ENCODE measurements at regions of chr19 and their contacts with region 1.

Region 1: GRCh38 chr19:12126707-12127106 is 13.4 kb downstream of the ZNF20 start:
- DNase-seq: no peak
- ATAC-seq: no peak
- H3K4me3 ChIP-seq: no peak overlapping the region
- H3K27ac ChIP-seq: no peak overlapping the region
- H3K4me1 ChIP-seq: no peaks in the 10 kb centered on the region
- H3K27me3 ChIP-seq: no peaks in the 10 kb centered on the region
- CTCF ChIP-seq: peak; percentile 57

Region 2: DNA sequence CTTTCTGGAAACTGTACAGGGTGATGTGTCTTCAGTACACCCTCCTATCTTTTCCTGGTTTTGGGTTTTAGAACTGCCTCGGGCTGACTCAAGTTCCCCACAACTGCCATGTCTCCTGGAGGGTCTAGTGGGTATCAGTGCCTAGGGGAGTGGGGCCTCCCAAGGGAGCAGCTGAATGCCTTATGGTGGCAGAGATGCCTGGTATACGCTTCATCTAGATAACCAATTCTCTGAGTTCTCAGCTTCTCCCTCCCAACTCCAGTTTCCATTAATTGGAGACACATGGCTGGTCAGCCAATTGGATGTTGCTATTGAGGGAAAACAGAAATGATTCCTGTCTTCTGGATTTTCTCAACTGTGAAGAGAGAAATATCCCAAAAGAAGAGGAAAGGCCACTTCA is 265.4 kb before region 1 on chr19:
- CTCF ChIA-PET with region 1: interaction called, 13 read pairs
- POLR2A ChIA-PET with region 1: no interaction called
- intact Hi-C with region 1: no loop called
- DNase-seq: no peak
- ATAC-seq: no peak
- H3K4me3 ChIP-seq: no peak overlapping the region
- H3K27ac ChIP-seq: no peak overlapping the region
- H3K4me1 ChIP-seq: no peaks in the 10 kb centered on the region
- H3K27me3 ChIP-seq: no peaks in the 10 kb centered on the region
- CTCF ChIP-seq: no peak

Region 3: GRCh38 chr19:12666265-12667048 is 539.8 kb after region 1 on chr19 and contains the starts of genes MAN2B1 and WDR83:
- CTCF ChIA-PET with region 1: no interaction called
- POLR2A ChIA-PET with region 1: no interaction called
- intact Hi-C with region 1: no loop called
- DNase-seq: peak; percentile 85
- ATAC-seq: peak; percentile 80
- H3K4me3 ChIP-seq: peak within 1 kb of the TSS; percentile 88
- H3K27ac ChIP-seq: no peak within 1 kb of the TSS
- H3K4me1 ChIP-seq: peaks cover 32% of the 10 kb centered on the region
- H3K27me3 ChIP-seq: no peaks in the 10 kb centered on the region
- CTCF ChIP-seq: no peak
- total RNA-seq, gene MAN2B1: 62.9 and 67.5 TPM in 2 replicates
- total RNA-seq, gene WDR83: 39.5 and 53.5 TPM in 2 replicates

Measured in PC-3 (cell line).